ENCODE measurements at regions of chr20 and their contacts with region 1.

Region 1: GRCh38 chr20:46695892-46696291 is 6.6 kb upstream of the TP53RK start:
- DNase-seq: peak; percentile 20
- H3K4me3 ChIP-seq: no peak overlapping the region
- H3K27me3 ChIP-seq: no peaks in the 10 kb centered on the region
- CTCF ChIP-seq: no peak

Region 2: DNA sequence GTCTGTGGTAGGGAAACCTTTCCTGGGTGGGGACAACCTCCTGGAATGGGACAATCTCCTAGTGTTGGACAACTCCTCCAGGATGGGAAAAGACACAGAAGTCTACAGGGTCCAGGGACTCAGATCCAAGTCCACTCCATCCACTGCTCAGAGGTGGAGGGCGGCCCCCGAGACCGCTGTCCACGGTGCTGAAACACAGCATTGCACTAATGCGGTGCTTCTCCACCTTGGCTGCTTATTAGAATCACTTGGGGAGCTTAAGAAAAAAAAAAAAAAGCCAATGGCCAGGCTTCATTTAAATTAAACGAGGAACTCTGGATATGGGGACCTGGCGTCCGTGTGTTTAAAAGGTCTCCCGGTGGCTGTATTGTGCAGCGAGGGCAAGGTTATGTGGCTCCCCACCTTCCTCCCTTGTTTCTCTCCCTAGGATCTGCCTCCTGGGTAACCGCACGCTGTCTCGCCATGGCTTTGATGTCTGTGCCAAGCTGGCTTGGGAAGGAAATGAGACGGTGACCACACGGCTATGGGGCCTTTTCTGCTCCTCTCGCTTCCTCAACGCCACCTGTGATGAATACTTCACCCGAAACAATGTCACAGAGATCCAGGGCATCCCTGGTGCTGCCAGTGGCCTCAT is 654.9 kb before region 1 on chr20:
- CTCF ChIA-PET with region 1: no interaction called
- POLR2A ChIA-PET with region 1: no interaction called
- DNase-seq: no peak
- H3K4me3 ChIP-seq: no peak overlapping the region
- H3K27me3 ChIP-seq: no peaks in the 10 kb centered on the region; the same call in 1 of the 2 replicates
- CTCF ChIP-seq: no peak

Region 3: DNA sequence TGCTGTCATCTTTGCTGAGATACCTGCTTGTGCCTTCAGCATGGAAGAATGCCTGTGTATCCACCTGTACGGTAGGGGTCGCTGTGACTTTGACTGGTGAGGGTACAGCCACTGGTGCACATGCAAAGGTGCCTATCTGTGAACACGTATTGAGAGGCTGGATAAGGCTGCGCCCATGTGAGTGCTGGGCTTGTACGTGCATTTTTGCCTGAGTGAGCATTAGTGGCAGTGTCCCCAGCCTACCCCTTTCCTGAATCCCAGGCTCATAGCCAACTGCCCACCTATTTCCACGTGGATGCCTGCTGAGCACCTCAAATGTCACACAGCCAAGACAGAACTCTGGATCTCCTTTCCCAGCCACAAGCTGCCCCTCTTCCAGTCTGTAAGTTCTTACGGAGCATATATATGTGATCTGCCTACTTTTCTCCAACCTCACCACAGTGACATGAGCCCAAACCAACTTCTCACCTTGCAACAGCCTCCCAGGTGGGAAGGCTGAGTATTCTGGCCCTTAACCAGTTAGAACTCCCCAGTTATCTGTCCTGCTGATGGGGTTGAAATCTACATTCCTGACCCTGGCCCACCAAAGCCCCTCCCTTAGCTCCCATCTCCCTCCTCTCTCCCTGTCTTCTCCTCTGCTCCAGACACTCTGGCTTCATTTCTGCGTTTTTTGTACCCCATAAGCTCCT is 12.4 kb after region 1 on chr20:
- CTCF ChIA-PET with region 1: interaction called, 11 read pairs
- POLR2A ChIA-PET with region 1: no interaction called
- DNase-seq: no peak
- H3K4me3 ChIP-seq: no peak overlapping the region
- H3K27me3 ChIP-seq: no peaks in the 10 kb centered on the region
- CTCF ChIP-seq: peak; percentile 19; the same call in 1 of the 2 replicates

Region 4: DNA sequence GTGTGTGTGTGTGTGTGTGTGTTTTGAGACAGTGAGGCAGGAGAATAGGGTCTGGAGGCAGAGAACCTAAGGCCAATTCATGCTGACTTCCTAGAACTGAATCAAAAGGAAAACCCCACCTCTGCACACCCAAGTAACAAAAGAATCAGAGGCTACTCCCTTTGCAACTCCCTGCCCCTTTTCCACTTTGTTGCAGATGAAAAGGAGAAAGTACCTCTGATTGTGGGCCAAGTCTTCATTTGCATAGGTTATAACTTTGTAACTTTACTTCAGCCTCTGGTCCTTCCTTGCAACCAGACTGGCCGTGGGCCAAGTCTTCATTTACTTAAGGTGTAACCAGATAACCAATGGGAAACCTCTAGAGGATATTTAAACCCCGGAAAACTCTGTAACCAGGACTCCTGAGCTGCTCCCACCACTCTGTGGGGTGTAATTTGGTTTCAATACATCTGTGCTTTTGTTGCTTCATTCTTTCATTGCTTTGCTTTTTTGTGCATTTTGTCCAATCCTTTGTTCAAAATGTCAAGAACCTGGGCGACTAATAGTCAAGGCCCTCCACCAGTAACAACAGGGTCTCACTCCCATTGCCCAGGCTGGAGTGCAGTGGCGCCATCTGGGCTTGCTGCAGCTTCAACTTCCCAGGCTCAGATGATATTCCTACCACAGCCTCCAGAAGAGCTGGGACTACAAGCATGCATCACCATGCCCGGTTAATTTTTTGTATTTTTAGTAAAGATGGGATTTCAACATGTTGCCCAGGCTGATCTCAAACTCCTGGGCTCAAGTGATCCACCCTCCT is 367.7 kb after region 1 on chr20:
- CTCF ChIA-PET with region 1: no interaction called
- POLR2A ChIA-PET with region 1: no interaction called
- DNase-seq: no peak
- H3K4me3 ChIP-seq: no peak overlapping the region
- H3K27me3 ChIP-seq: no peaks in the 10 kb centered on the region
- CTCF ChIP-seq: no peak